H1 (cell line): ENCODE measurements at regions of chr17 and their contacts with region 1.

Region 1: GRCh38 chr17:8016632-8017478 is 14.4 kb downstream of the GUCY2D start:
- DNase-seq: peak; percentile 41 to 91
- H3K4me3 ChIP-seq: peak overlapping the region; percentile 53 to 80 (median 66)
- H3K27ac ChIP-seq: no peak overlapping the region
- H3K4me1 ChIP-seq: peaks cover 0 to 5% (median 0%) of the 10 kb centered on the region in 4 experiments; a peak in 2 of 7 replicates
- H3K27me3 ChIP-seq: peaks cover 5 to 35% (median 21%) of the 10 kb centered on the region in 4 experiments
- CTCF ChIP-seq: peak; percentile 84 to 93 (median 89)
- EP300 ChIP-seq: no peak
- POLR2A ChIP-seq: no peak
- RAD21 ChIP-seq: peak; percentile 84 to 89

Region 2: DNA sequence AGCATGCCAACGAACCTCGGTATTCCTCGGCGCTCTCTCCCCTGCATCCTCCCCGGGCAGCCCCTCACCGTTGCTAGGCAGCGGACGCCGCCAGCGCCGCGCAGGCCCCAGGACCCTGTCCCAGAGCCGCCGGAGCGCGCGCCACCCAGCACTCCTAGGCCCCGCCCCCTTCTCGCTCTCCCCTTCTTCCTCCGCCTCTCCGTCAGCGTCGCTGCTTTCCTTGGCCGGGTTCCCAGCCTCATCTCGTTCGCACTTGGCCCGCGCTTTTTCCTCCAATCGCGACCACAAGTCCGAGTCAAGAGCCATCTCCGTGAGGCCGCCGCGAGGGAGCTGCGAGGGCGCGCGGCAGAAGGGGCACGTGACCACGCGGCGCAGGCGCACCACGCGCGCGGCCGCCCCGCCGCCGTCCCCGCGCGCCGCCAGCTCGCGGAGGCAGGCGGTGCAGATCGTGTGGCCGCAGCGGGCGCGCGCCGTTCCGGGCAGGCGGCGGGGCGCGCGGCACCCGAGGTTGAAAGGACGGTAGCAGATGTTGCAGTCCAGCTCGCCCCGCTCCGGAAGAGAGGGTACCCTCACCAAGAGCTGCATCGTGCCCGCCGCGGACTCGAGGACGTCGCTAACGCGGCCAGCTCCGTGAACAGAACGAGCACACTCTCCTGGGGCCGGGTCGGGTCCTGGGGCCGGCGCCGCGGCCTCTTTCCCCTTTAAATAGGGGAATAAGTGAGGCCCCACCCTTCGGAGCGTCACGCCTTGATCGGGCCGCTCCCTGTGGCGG is 101.1 kb before region 1 on chr17 and contains the start of gene RNF227:
- CTCF ChIA-PET with region 1: interaction called, 19 read pairs
- POLR2A ChIA-PET with region 1: interaction called, 3 read pairs
- DNase-seq: peak in 1 of 2 experiments; percentile 92
- H3K4me3 ChIP-seq: peak within 1 kb of the TSS; percentile 30 to 53 (median 37)
- H3K27ac ChIP-seq: no peak within 1 kb of the TSS
- H3K4me1 ChIP-seq: peaks cover 0 to 6% (median 6%) of the 10 kb centered on the region in 4 experiments; a peak in 5 of 7 replicates
- H3K27me3 ChIP-seq: peaks cover 10 to 30% (median 26%) of the 10 kb centered on the region in 4 experiments
- CTCF ChIP-seq: no peak
- EP300 ChIP-seq: no peak
- POLR2A ChIP-seq: no peak
- RAD21 ChIP-seq: no peak
- total RNA-seq, gene RNF227: 0.63 and 0.77 TPM in 2 replicates

Region 3: GRCh38 chr17:7931709-7932482 is 85.0 kb before region 1 on chr17 and contains the starts of genes CNTROB and TRAPPC1:
- CTCF ChIA-PET with region 1: interaction called, 11 read pairs
- POLR2A ChIA-PET with region 1: no interaction called
- DNase-seq: peak; percentile 90 to 98
- H3K4me3 ChIP-seq: peak within 1 kb of the TSS; percentile 80 to 95 (median 89)
- H3K27ac ChIP-seq: peak within 1 kb of the TSS; percentile 16; the same call in 1 of the 2 replicates
- H3K4me1 ChIP-seq: peaks cover 0 to 5% (median 3%) of the 10 kb centered on the region in 4 experiments; a peak in 4 of 7 replicates
- H3K27me3 ChIP-seq: peaks cover 11 to 28% (median 25%) of the 10 kb centered on the region in 4 experiments
- CTCF ChIP-seq: peak in 1 of 3 experiments; percentile 6; a peak in 1 of 4 replicates
- EP300 ChIP-seq: no peak
- POLR2A ChIP-seq: no peak
- RAD21 ChIP-seq: no peak
- total RNA-seq, gene CNTROB: 30.0 and 31.9 TPM in 2 replicates
- total RNA-seq, gene TRAPPC1: 99.3 and 114 TPM in 2 replicates

Region 4: DNA sequence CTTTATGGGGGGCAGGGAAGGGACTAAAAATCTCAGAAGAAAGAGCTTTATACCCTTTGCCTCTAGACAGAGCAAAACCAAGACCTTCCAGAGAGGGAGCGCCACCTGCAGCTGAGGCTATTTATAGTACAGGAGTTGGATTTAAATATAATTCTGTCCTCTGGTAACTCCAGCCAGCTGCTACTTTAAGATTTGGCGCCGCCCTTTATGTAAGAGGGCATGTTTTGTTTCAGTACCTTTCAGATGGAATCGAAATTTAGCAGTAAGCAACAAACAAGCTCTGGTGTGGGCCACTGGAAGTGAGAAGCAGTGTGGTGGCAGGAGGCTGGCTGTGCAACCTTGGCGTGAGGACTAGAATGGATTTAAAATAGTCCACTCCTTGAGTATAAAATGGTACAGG is 19.7 kb before region 1 on chr17:
- CTCF ChIA-PET with region 1: interaction called, 50 read pairs
- POLR2A ChIA-PET with region 1: interaction called, 3 read pairs
- DNase-seq: no peak
- H3K4me3 ChIP-seq: no peak overlapping the region
- H3K27ac ChIP-seq: no peak overlapping the region
- H3K4me1 ChIP-seq: peaks cover 0 to 2% (median 0%) of the 10 kb centered on the region in 4 experiments; a peak in 1 of 7 replicates
- H3K27me3 ChIP-seq: peaks cover 5 to 14% (median 6%) of the 10 kb centered on the region in 4 experiments
- CTCF ChIP-seq: peak in 2 of 3 experiments; percentile 66 to 81; a peak in 3 of 4 replicates
- EP300 ChIP-seq: no peak
- POLR2A ChIP-seq: no peak
- RAD21 ChIP-seq: peak; percentile 48 to 55

Region 5: DNA sequence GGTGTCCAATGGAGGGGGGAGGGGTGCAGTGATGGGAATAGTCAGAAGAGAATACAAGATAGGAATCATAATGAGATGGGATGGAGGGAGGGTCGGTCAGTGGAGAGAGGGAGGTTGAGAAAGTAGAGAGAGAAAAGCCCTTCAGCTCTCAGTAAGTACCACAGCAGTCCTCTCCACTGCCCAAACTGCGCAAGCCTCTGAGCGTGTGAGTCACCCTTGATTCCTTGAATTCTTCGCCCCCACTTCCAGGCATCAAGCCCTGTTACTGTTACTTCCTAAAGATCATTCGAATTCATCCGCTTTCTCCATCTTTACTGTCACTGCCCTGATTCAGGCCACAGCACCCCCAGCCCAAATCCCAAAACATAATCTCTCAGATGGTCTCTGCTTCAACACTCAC is 12.0 kb before region 1 on chr17:
- CTCF ChIA-PET with region 1: interaction called, 50 read pairs
- POLR2A ChIA-PET with region 1: interaction called, 12 read pairs
- DNase-seq: no peak
- H3K4me3 ChIP-seq: no peak overlapping the region
- H3K27ac ChIP-seq: no peak overlapping the region
- H3K4me1 ChIP-seq: peaks cover 0 to 9% (median 4%) of the 10 kb centered on the region in 4 experiments; a peak in 5 of 7 replicates
- H3K27me3 ChIP-seq: peaks cover 35 to 53% (median 42%) of the 10 kb centered on the region in 4 experiments
- CTCF ChIP-seq: no peak
- EP300 ChIP-seq: no peak
- POLR2A ChIP-seq: no peak
- RAD21 ChIP-seq: no peak

Region 6: GRCh38 chr17:8029135-8029534 is 12.3 kb after region 1 on chr17:
- CTCF ChIA-PET with region 1: interaction called, 43 read pairs
- POLR2A ChIA-PET with region 1: interaction called, 3 read pairs
- DNase-seq: no peak
- H3K4me3 ChIP-seq: no peak overlapping the region
- H3K27ac ChIP-seq: no peak overlapping the region
- H3K4me1 ChIP-seq: no peaks in the 10 kb centered on the region
- H3K27me3 ChIP-seq: no peaks in the 10 kb centered on the region; a peak in 2 of 7 replicates
- CTCF ChIP-seq: no peak
- EP300 ChIP-seq: no peak
- POLR2A ChIP-seq: no peak
- RAD21 ChIP-seq: no peak

Region 7: DNA sequence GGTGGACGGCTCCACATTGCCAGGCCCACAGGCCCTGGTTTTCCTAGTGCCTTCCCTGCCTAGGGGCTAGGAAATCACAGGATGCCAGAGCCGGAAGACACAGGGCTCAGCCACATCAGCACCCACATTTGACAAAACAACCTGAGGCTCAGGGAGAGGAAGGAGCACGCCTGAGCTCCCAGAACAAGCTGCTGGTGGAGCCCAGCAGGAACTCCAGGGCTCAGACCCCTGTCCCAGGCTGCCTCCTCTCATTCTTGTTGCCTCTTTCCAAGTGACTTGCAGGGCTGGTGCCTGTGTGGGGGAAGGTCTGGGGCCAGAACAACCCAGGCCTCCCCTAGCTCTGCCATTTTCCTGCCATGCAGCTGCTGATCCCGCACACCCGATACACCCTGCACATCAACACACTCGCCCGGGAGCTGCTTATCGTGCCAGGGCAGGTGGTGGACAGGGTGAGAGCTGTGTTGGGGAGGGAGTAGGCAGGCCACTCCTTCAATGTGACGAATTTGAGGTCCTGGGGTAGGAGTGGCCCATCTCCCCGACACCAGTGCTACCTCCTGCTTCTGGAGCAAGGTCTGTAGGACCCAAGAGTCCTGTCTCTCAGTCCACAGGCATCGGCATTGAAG is 29.6 kb after region 1 on chr17:
- CTCF ChIA-PET with region 1: interaction called, 141 read pairs
- POLR2A ChIA-PET with region 1: no interaction called
- DNase-seq: no peak
- H3K4me3 ChIP-seq: no peak overlapping the region
- H3K27ac ChIP-seq: no peak overlapping the region
- H3K4me1 ChIP-seq: no peaks in the 10 kb centered on the region
- H3K27me3 ChIP-seq: no peaks in the 10 kb centered on the region; a peak in 2 of 7 replicates
- CTCF ChIP-seq: no peak
- EP300 ChIP-seq: no peak
- POLR2A ChIP-seq: no peak
- RAD21 ChIP-seq: no peak